ENCODE measurements at regions of chr10 and their contacts with region 1.

Region 1: DNA sequence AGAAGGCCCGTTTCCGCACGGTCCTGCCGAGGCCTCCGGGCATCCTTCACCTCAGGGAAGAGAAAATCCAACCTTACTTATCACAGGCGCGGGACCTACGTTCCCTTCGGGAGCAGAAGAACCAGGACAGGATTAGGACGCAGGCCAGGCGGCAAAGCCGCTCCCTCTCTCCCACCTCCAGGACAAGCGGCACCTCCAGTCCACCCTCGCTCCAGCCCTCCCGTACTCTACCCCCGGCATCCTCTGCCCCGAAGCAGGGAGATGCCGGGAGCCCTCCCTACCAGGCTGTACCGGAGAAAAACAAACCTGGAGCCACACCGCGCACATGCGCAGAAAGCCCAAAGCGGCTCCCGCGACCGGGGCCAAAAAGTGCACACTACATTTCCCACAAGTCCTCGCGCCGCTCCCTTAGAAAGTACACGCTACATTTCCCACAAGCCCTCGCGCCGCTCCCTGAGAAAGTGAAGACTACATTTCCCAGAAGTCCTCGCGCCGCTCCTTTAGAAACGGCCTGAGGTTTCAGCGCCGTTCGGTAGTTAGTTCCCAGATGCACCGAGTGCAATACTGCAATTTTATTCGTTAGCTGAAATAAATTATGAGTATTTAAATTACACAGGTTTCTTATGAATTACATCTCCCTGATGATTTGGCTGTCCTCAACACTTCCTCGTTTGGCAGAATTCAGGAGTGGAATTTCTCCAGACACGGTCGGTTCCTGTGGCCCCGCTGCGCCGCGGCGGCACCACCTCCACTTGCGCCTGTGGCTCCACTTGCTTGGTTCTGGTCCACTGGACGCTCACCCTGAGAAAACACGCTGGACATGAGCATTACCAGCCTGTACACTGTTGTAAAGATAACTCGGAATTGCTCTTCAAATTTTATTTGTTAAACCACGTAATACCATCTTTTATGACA is 85.6 kb downstream of the ZNF33B start:
- DNase-seq: peak; percentile 95
- ATAC-seq: peak; percentile 96
- H3K4me3 ChIP-seq: peak overlapping the region; percentile 46 to 98 (median 95)
- H3K4me3 Mint-ChIP-seq: peak overlapping the region; percentile 99
- H3K27ac ChIP-seq: peak overlapping the region; percentile 74 to 79
- H3K27ac Mint-ChIP-seq: peak overlapping the region; percentile 98
- H3K4me1 ChIP-seq: peaks cover 17 to 18% of the 10 kb centered on the region in 2 donors
- H3K4me1 Mint-ChIP-seq: peaks cover 34% of the 10 kb centered on the region
- H3K27me3 ChIP-seq: no peaks in the 10 kb centered on the region
- H3K27me3 Mint-ChIP-seq: no peaks in the 10 kb centered on the region
- CTCF ChIP-seq: no peak

Region 2: DNA sequence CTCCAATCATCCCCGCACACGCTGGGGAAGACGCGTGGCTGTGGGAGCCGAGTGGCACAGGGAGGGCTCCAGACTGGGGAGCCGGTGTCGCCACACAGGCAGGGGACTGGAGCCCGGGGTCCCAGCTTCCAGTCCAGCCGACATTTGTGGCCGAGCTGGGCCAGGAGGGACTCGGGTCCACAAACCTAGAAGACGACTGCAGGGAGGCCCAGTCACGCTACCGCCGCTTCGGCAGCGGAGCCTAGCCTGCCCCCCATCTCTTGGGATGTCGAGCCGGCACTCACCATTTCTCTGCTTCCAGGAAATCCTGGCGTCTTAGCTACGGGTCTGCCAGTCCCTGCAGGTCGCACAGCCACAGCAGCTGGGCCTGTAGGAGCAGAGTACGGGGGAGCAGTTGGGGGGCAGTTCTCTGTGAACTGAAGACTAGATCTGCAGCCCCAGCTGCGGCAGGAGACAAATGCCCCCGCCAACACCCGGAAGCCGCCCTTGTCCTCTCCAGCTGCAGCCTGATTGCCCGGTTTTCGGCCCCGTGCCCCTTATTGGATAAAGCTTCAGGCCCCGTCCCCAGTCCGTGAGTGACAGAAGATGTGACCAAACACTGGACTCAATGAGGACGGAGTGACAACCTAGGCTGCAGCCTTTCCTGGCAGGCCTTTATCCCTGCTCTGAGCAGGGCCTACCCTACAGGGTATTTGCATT is 185.1 kb before region 1 on chr10:
- CTCF ChIA-PET with region 1: no interaction called
- POLR2A ChIA-PET with region 1: no interaction called
- intact Hi-C with region 1: loop called (anchors 5 kb)
- DNase-seq: peak; percentile 74
- ATAC-seq: peak; percentile 94
- H3K4me3 ChIP-seq: peak overlapping the region in 4 of 5 experiments; percentile 30 to 61 (median 49)
- H3K4me3 Mint-ChIP-seq: peak overlapping the region; percentile 83
- H3K27ac ChIP-seq: no peak overlapping the region
- H3K27ac Mint-ChIP-seq: peak overlapping the region; percentile 46
- H3K4me1 ChIP-seq: peaks cover 0 to 6% of the 10 kb centered on the region in 2 donors
- H3K4me1 Mint-ChIP-seq: peaks cover 4% of the 10 kb centered on the region
- H3K27me3 ChIP-seq: peaks cover 0 to 3% (median 0%) of the 10 kb centered on the region in 4 experiments
- H3K27me3 Mint-ChIP-seq: no peaks in the 10 kb centered on the region
- CTCF ChIP-seq: no peak

Region 3: GRCh38 chr10:42574336-42574735 is 21.6 kb after region 1 on chr10:
- CTCF ChIA-PET with region 1: no interaction called
- POLR2A ChIA-PET with region 1: no interaction called
- intact Hi-C with region 1: no loop called
- DNase-seq: no peak
- ATAC-seq: no peak
- H3K4me3 ChIP-seq: no peak overlapping the region
- H3K4me3 Mint-ChIP-seq: no peak overlapping the region
- H3K27ac ChIP-seq: no peak overlapping the region
- H3K27ac Mint-ChIP-seq: no peak overlapping the region
- H3K4me1 ChIP-seq: peaks cover 0 to 6% of the 10 kb centered on the region in 2 donors
- H3K4me1 Mint-ChIP-seq: peaks cover 5% of the 10 kb centered on the region
- H3K27me3 ChIP-seq: no peaks in the 10 kb centered on the region
- H3K27me3 Mint-ChIP-seq: no peaks in the 10 kb centered on the region
- CTCF ChIP-seq: no peak

Region 4: DNA sequence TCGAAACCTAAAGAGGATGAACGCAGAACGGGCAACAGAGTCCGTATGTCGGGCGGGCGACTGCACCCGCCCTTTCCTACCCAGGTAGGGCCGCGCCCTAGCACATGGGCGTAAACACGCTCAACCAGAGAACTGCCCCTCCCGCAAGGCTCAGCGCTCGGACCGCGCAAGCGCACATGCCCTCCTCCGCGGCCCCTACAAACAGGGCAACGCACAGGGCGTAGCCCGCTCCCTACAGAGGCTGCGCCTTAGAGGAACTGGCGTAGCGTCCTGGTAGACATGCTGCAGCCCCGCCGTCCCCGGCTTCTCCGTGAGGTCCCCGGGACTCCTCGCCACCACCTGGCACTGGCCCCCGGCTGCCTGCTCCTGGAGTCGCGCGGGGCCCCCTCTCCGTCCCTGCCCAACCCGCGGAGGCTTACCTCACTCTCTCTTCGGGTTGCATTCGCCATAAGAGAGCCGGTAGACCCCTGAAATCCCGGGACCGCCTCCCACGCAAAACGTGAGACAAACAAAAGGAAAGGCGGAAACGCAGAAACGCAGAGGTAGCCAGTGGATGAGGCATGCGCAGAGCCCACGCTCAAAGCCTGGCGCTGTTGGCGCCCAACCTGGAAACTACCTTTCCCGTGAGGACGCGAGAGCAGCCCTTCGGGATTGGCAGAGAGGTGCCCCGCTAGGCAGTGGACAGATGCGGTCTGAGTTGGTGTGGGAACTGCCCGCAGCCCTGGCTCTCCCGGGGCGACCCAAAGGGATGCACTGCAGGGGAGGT is 85.5 kb after region 1 on chr10 and contains the start of gene ZNF33B:
- CTCF ChIA-PET with region 1: no interaction called
- POLR2A ChIA-PET with region 1: no interaction called
- intact Hi-C with region 1: loop called (anchors 1 kb)
- DNase-seq: peak; percentile 95
- ATAC-seq: peak; percentile 94
- H3K4me3 ChIP-seq: peak within 1 kb of the TSS; percentile 86 to 97 (median 90)
- H3K4me3 Mint-ChIP-seq: peak within 1 kb of the TSS; percentile 99
- H3K27ac ChIP-seq: peak within 1 kb of the TSS; percentile 87 to 92
- H3K27ac Mint-ChIP-seq: peak within 1 kb of the TSS; percentile 99
- H3K4me1 ChIP-seq: peaks cover 14 to 15% of the 10 kb centered on the region in 2 donors
- H3K4me1 Mint-ChIP-seq: peaks cover 40% of the 10 kb centered on the region
- H3K27me3 ChIP-seq: no peaks in the 10 kb centered on the region
- H3K27me3 Mint-ChIP-seq: no peaks in the 10 kb centered on the region
- CTCF ChIP-seq: no peak
- total RNA-seq, gene ZNF33B: 66.6 and 66.9 TPM in 2 replicates

Region 5: GRCh38 chr10:42782446-42783180 is 229.9 kb after region 1 on chr10 and contains the start of gene BMS1:
- CTCF ChIA-PET with region 1: no interaction called
- POLR2A ChIA-PET with region 1: no interaction called
- intact Hi-C with region 1: loop called (anchors 1 kb)
- DNase-seq: peak; percentile 92
- ATAC-seq: peak; percentile 86
- H3K4me3 ChIP-seq: peak within 1 kb of the TSS; percentile 70 to 93 (median 85)
- H3K4me3 Mint-ChIP-seq: peak within 1 kb of the TSS; percentile 96
- H3K27ac ChIP-seq: peak within 1 kb of the TSS; percentile 77 to 81
- H3K27ac Mint-ChIP-seq: peak within 1 kb of the TSS; percentile 89
- H3K4me1 ChIP-seq: peaks cover 12 to 13% of the 10 kb centered on the region in 2 donors
- H3K4me1 Mint-ChIP-seq: peaks cover 24% of the 10 kb centered on the region
- H3K27me3 ChIP-seq: no peaks in the 10 kb centered on the region
- H3K27me3 Mint-ChIP-seq: peaks cover 6% of the 10 kb centered on the region
- CTCF ChIP-seq: no peak
- total RNA-seq, gene BMS1: 17.1 and 17.5 TPM in 2 replicates

Region 6: DNA sequence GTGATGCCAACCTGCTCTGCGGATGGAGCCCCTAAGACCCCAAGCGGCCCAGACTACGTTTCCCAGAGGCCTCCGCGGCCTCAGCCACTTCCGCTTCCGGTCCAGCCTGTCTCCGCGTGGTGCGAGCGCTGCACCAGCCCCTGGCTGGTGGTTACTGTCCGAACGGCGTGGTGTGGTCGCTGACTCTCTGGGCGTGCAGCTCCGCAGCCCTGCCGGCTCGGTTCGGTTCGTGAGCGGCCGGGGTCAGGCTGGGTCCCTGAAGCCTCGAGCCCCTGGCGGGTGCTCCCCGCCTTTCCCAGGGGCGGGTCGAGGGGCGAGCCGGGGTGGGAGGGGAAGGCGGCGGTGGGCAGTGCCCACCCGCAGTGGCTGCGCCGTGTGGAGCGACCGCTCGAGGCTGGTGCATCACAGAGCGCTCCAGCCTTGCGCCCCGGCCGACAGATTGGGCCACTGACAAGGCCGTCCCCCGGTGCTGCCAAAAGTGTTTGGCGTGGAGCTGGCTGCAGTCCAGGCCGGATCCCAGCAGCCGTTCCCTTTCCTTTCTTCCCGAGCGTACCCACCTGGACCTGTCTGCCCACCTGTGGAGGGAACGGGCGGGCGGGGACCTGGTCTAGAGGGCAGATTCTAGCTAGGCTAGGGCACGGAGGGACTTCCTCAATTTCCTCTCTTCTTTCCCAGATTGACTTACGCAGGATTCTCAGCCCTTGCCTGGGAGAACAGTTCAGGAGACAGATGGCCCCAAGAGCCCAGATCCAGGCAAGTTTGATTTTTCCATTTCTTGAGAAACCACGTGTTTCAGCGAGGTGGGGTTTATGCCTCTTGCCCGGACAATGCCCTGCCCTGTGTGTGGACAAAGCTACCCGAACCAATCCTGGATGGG is 1053.8 kb after region 1 on chr10 and contains the start of gene ZNF485:
- CTCF ChIA-PET with region 1: no interaction called
- POLR2A ChIA-PET with region 1: no interaction called
- intact Hi-C with region 1: loop called (anchors 1 kb)
- DNase-seq: peak; percentile 71
- ATAC-seq: peak; percentile 95
- H3K4me3 ChIP-seq: peak within 1 kb of the TSS; percentile 49 to 86 (median 71)
- H3K4me3 Mint-ChIP-seq: peak within 1 kb of the TSS; percentile 78
- H3K27ac ChIP-seq: peak within 1 kb of the TSS in 1 of 2 donors; percentile 56
- H3K27ac Mint-ChIP-seq: peak within 1 kb of the TSS; percentile 72
- H3K4me1 ChIP-seq: peaks cover 10% of the 10 kb centered on the region in 2 donors
- H3K4me1 Mint-ChIP-seq: peaks cover 18% of the 10 kb centered on the region
- H3K27me3 ChIP-seq: no peaks in the 10 kb centered on the region
- H3K27me3 Mint-ChIP-seq: peaks cover 4% of the 10 kb centered on the region
- CTCF ChIP-seq: no peak
- total RNA-seq, gene ZNF485: 8.4 and 9.5 TPM in 2 replicates